Breast epithelium (tissue), 4 donors: ENCODE measurements at regions of chr7 and their contacts with region 1.

Region 1: DNA sequence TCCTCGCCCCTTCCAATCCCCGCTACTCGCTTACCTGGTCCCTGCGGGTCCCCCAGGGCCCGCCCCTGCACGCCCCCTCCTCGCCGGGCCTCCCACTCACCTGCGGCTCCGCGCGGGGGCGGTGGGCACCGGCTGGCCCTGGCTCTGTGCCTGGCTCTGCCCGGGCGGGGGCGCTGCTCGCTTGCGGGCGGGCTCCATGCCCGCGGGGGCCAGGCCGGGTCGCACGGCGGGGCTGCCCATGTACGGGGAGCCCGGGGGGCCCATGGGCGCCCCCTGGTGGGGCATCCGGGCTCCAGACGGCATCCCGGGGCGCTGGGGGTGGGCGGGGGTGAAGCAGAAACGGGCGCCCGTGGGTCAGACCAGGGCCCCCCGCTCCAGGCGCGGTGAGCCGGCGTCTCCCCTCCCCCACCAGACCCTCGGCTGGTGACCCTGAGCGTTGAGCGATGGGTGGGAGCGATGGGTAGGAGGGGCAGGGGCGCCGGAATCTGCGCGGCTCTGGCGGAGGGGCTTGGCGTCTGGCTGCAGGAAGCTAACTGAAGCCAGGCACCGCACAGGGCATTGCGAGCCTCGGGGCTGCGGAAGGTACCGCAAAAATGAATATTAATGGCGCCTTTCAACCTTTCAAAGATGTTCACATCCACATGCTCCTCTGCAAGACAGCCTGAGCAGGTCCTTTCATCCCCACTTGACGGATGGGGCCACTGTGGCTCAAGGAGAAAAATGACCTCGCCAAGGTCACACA is 3.0 kb downstream of the SMARCD3 start:
- DNase-seq: no peak
- H3K4me3 ChIP-seq: peak overlapping the region; percentile 24 to 70 (median 46)
- H3K27ac ChIP-seq: peak overlapping the region in 1 of 2 donors; percentile 34
- H3K4me1 ChIP-seq: peaks cover 9 to 21% of the 10 kb centered on the region in 2 donors
- H3K27me3 ChIP-seq: no peaks in the 10 kb centered on the region
- CTCF ChIP-seq: peak in 1 of 3 donors; percentile 20
- POLR2A ChIP-seq: no peak

Region 2: GRCh38 chr7:151313857-151314256 is 68.3 kb after region 1 on chr7:
- intact Hi-C with region 1: loop called (anchors 2 kb)
- DNase-seq: peak in 1 of 2 donors; percentile 35
- H3K4me3 ChIP-seq: no peak overlapping the region
- H3K27ac ChIP-seq: no peak overlapping the region
- H3K4me1 ChIP-seq: no peaks in the 10 kb centered on the region
- H3K27me3 ChIP-seq: no peaks in the 10 kb centered on the region
- CTCF ChIP-seq: no peak
- POLR2A ChIP-seq: no peak